Breast epithelium (tissue), 4 donors: ENCODE measurements at regions of chr4 and their contacts with region 1.

Region 1: GRCh38 chr4:100935090-100935489 is 412.2 kb downstream of the PPP3CA start:
- DNase-seq: no peak
- H3K4me3 ChIP-seq: no peak overlapping the region
- H3K27ac ChIP-seq: no peak overlapping the region
- H3K4me1 ChIP-seq: no peaks in the 10 kb centered on the region
- H3K27me3 ChIP-seq: no peaks in the 10 kb centered on the region
- CTCF ChIP-seq: no peak
- POLR2A ChIP-seq: no peak

Region 2: GRCh38 chr4:100076743-100077142 is 858.3 kb before region 1 on chr4:
- intact Hi-C with region 1: loop called (anchors 5 kb)
- DNase-seq: no peak
- H3K4me3 ChIP-seq: no peak overlapping the region
- H3K27ac ChIP-seq: no peak overlapping the region
- H3K4me1 ChIP-seq: no peaks in the 10 kb centered on the region
- H3K27me3 ChIP-seq: no peaks in the 10 kb centered on the region
- CTCF ChIP-seq: no peak
- POLR2A ChIP-seq: no peak

Region 3: DNA sequence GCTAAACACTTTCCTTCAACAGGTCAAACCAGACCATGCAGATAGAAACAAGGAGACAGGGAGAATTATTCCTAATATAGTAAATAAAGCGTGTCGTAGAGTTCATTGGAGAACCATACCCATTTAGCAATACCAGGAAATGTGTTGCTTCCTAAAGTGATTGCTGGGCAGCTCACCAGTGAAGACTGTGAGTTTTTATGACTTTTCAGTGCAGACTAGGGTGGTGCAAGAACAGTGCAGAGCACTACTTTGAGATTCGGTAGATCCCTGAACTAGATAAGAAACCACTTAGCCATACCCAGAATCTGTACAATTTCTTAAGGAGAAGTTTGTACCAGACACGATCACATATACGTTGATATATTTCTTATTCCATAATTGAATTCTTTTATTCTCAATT is 504.6 kb before region 1 on chr4:
- intact Hi-C with region 1: loop called (anchors 5 kb)
- DNase-seq: no peak
- H3K4me3 ChIP-seq: no peak overlapping the region
- H3K27ac ChIP-seq: no peak overlapping the region
- H3K4me1 ChIP-seq: no peaks in the 10 kb centered on the region
- H3K27me3 ChIP-seq: no peaks in the 10 kb centered on the region
- CTCF ChIP-seq: no peak
- POLR2A ChIP-seq: no peak

Region 4: DNA sequence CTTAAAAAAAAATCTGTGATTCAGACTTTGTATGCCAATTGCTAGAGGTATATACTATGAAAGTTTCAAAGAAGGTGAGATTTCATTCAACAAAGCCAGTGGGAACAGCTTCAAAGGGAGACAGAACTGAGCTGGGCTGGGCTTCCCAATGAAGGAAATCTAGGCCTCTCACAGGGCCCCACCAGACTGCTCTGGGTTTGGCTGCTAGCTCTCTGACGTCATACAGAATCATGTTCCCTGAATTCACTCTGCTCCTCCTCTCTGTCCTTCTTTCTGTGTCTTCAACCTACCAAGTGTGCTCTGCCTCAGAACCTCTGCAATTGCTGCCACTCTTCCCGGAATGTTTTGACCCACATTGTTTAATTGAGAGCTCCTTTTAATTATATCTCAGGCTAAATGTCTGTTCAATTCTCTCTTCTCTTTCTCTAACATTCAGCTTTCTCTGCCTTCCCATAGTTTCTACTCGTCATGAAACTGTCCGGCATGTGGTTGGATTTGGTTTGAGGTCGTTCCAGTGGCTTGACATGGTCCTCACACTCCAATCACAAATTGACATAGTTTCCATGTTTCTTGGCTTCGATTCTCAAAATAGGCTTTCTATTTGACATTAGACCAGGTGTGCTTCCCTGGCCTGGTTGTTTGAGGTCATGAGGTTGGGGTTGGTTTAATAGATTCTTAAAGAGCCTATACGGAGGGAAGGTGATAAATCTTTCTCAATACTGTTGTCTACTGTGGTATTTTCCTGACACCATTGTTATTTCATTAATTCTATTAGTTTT is 135.1 kb before region 1 on chr4:
- intact Hi-C with region 1: no loop called
- DNase-seq: no peak
- H3K4me3 ChIP-seq: no peak overlapping the region
- H3K27ac ChIP-seq: no peak overlapping the region
- H3K4me1 ChIP-seq: no peaks in the 10 kb centered on the region
- H3K27me3 ChIP-seq: no peaks in the 10 kb centered on the region
- CTCF ChIP-seq: no peak
- POLR2A ChIP-seq: no peak

Region 5: DNA sequence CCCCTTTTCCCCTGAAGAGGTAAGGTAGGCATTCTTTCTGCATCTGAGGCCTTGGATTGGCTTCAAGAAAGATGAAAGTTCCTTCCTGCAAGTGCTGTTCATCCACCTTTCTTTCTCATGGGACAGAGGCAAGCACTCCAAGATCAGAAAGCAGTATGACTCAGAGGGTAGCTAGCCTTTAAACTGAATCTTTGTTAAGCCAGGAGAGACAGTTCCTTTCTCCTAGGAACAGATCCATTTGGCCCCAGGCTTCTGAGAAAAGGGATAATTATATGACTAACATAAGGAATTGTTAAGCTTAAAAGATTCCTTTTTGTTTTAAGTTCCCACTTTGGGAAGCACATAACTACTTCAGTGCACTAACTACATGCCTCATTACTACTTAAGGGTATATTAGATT is 220.3 kb after region 1 on chr4:
- intact Hi-C with region 1: loop called (anchors 10 kb)
- DNase-seq: no peak
- H3K4me3 ChIP-seq: no peak overlapping the region
- H3K27ac ChIP-seq: peak overlapping the region in 1 of 2 donors; percentile 54
- H3K4me1 ChIP-seq: no peaks in the 10 kb centered on the region
- H3K27me3 ChIP-seq: no peaks in the 10 kb centered on the region
- CTCF ChIP-seq: no peak
- POLR2A ChIP-seq: no peak